ENCODE measurements at regions of chr9 and their contacts with region 1.

Region 1: DNA sequence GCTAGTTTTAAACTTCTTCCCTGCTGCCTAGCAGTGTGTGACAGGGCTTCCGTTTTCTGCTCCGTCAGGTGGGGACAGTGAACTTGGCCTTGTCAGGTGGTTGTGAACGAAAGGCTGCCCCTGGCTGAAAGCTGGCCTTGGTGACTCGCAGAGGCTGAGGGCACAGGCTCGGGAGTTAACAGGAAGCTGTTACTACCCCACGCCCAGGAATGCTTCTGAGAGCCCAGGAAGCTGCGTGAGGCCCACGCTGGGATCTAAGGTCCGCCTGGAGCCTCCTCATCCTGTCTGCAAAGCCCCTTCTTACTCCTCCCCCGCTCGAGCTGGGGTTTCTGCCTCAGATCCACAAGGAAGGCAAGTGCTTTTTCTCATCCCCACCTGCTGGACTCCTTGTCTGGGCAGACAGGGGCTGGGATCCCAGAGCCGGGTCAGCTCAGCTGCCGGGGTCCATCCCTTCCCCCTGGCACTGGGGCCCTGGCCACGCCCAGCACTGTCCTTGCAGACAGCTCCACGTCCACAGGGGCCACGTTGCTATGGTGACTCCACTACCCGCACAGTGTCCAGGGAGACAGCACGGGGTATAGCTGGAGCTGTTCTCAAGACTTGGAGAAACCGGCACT is 124.7 kb upstream of the TBC1D2 start:
- DNase-seq: no peak
- H3K4me3 ChIP-seq: no peak overlapping the region
- H3K4me3 Mint-ChIP-seq: no peak overlapping the region
- H3K27ac ChIP-seq: no peak overlapping the region
- H3K27ac Mint-ChIP-seq: no peak overlapping the region
- H3K4me1 ChIP-seq: no peaks in the 10 kb centered on the region
- H3K4me1 Mint-ChIP-seq: no peaks in the 10 kb centered on the region
- H3K27me3 ChIP-seq: no peaks in the 10 kb centered on the region
- H3K27me3 Mint-ChIP-seq: peaks cover 0 to 3% (median 1%) of the 10 kb centered on the region in 3 donors
- CTCF ChIP-seq: no peak

Region 2: GRCh38 chr9:98192503-98193335 is 187.5 kb before region 1 on chr9 and contains the start of gene CORO2A:
- intact Hi-C with region 1: no loop called
- DNase-seq: peak; percentile 40 to 63 (median 42)
- H3K4me3 ChIP-seq: peak within 1 kb of the TSS; percentile 48 to 89 (median 71)
- H3K4me3 Mint-ChIP-seq: peak within 1 kb of the TSS; percentile 92 to 95
- H3K27ac ChIP-seq: peak within 1 kb of the TSS; percentile 20 to 60
- H3K27ac Mint-ChIP-seq: peak within 1 kb of the TSS; percentile 50 to 88 (median 78)
- H3K4me1 ChIP-seq: peaks cover 22 to 28% of the 10 kb centered on the region in 2 donors
- H3K4me1 Mint-ChIP-seq: peaks cover 42% of the 10 kb centered on the region
- H3K27me3 ChIP-seq: no peaks in the 10 kb centered on the region
- H3K27me3 Mint-ChIP-seq: peaks cover 2 to 11% (median 6%) of the 10 kb centered on the region in 3 donors
- CTCF ChIP-seq: peak; percentile 26
- polyA plus RNA-seq, gene CORO2A: 1.2 to 3.5 (median 2.1) TPM

Region 3: GRCh38 chr9:98326459-98327248 is 53.5 kb before region 1 on chr9:
- intact Hi-C with region 1: loop called in 1 of 2 experiments (anchors 10 kb)
- DNase-seq: no peak
- H3K4me3 ChIP-seq: no peak overlapping the region
- H3K4me3 Mint-ChIP-seq: no peak overlapping the region
- H3K27ac ChIP-seq: no peak overlapping the region
- H3K27ac Mint-ChIP-seq: no peak overlapping the region
- H3K4me1 ChIP-seq: no peaks in the 10 kb centered on the region
- H3K4me1 Mint-ChIP-seq: no peaks in the 10 kb centered on the region
- H3K27me3 ChIP-seq: no peaks in the 10 kb centered on the region
- H3K27me3 Mint-ChIP-seq: peaks cover 3 to 12% (median 6%) of the 10 kb centered on the region in 3 donors
- CTCF ChIP-seq: no peak

Measured in CD14-positive monocyte (primary cell).